ENCODE measurements at regions of chrX and their contacts with region 1.

Region 1: GRCh38 chrX:41116948-41117347 is 31.7 kb downstream of the USP9X start:
- DNase-seq: no peak
- H3K4me3 ChIP-seq: no peak overlapping the region
- H3K27ac ChIP-seq: no peak overlapping the region
- H3K4me1 ChIP-seq: peaks cover 0 to 63% (median 11%) of the 10 kb centered on the region in 4 donors
- H3K27me3 ChIP-seq: no peaks in the 10 kb centered on the region
- CTCF ChIP-seq: no peak

Region 2: GRCh38 chrX:40651620-40652223 is 465.2 kb before region 1 on chrX:
- intact Hi-C with region 1: loop called (anchors 5 kb)
- DNase-seq: peak in 1 of 2 donors; percentile 63
- H3K4me3 ChIP-seq: no peak overlapping the region
- H3K27ac ChIP-seq: no peak overlapping the region
- H3K4me1 ChIP-seq: peaks cover 0 to 12% (median 5%) of the 10 kb centered on the region in 4 donors
- H3K27me3 ChIP-seq: no peaks in the 10 kb centered on the region
- CTCF ChIP-seq: peak; percentile 52 to 73

Region 3: GRCh38 chrX:40877887-40878286 is 239.1 kb before region 1 on chrX:
- intact Hi-C with region 1: loop called (anchors 5 kb)
- DNase-seq: no peak
- H3K4me3 ChIP-seq: no peak overlapping the region
- H3K27ac ChIP-seq: no peak overlapping the region
- H3K4me1 ChIP-seq: no peaks in the 10 kb centered on the region
- H3K27me3 ChIP-seq: no peaks in the 10 kb centered on the region
- CTCF ChIP-seq: peak; percentile 32 to 47

Region 4: DNA sequence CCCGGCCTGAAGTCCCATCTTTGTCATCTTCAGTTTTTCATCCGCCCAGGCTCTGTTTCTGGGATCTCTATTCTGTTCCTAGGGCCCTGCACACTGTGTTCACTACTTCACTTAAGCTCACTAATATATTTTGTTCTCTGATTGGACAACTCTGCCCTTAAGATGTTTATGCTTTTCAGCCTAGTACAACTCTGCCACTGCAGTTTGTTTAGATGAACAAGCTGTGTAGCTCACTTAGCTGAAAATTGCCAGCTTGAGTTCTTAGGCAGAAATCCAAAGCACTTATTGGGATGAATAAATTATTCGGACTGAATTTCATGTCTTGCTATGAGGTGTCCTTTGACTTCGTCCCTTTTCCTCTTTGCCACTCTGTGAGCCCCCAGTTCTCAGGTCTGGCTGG is 391.0 kb after region 1 on chrX:
- intact Hi-C with region 1: no loop called
- DNase-seq: no peak
- H3K4me3 ChIP-seq: no peak overlapping the region
- H3K27ac ChIP-seq: no peak overlapping the region
- H3K4me1 ChIP-seq: no peaks in the 10 kb centered on the region
- H3K27me3 ChIP-seq: no peaks in the 10 kb centered on the region
- CTCF ChIP-seq: no peak